ENCODE measurements at regions of chr1 and their contacts with region 1.

Region 1: GRCh38 chr1:189429610-189430009 is 1048.1 kb downstream of the BRINP3 start:
- DNase-seq: peak; percentile 53
- ATAC-seq: peak; percentile 76
- H3K4me3 ChIP-seq: no peak overlapping the region
- H3K27ac ChIP-seq: no peak overlapping the region
- H3K4me1 ChIP-seq: no peaks in the 10 kb centered on the region
- H3K27me3 ChIP-seq: no peaks in the 10 kb centered on the region
- CTCF ChIP-seq: peak; percentile 78
- EP300 ChIP-seq: no peak
- POLR2A ChIP-seq: no peak
- RAD21 ChIP-seq: no peak

Region 2: GRCh38 chr1:189313488-189313887 is 116.1 kb before region 1 on chr1:
- CTCF ChIA-PET with region 1: no interaction called
- POLR2A ChIA-PET with region 1: no interaction called
- in situ Hi-C with region 1: no loop called
- intact Hi-C with region 1: no loop called
- DNase-seq: no peak
- ATAC-seq: no peak
- H3K4me3 ChIP-seq: no peak overlapping the region
- H3K27ac ChIP-seq: no peak overlapping the region
- H3K4me1 ChIP-seq: no peaks in the 10 kb centered on the region
- H3K27me3 ChIP-seq: no peaks in the 10 kb centered on the region
- CTCF ChIP-seq: no peak
- EP300 ChIP-seq: no peak
- POLR2A ChIP-seq: no peak
- RAD21 ChIP-seq: no peak

Region 3: GRCh38 chr1:189369612-189370011 is 60.0 kb before region 1 on chr1:
- CTCF ChIA-PET with region 1: no interaction called
- POLR2A ChIA-PET with region 1: no interaction called
- in situ Hi-C with region 1: no loop called
- intact Hi-C with region 1: no loop called
- DNase-seq: no peak
- ATAC-seq: no peak
- H3K4me3 ChIP-seq: no peak overlapping the region
- H3K27ac ChIP-seq: no peak overlapping the region
- H3K4me1 ChIP-seq: no peaks in the 10 kb centered on the region
- H3K27me3 ChIP-seq: no peaks in the 10 kb centered on the region
- CTCF ChIP-seq: no peak
- EP300 ChIP-seq: no peak
- POLR2A ChIP-seq: no peak
- RAD21 ChIP-seq: no peak

Region 4: DNA sequence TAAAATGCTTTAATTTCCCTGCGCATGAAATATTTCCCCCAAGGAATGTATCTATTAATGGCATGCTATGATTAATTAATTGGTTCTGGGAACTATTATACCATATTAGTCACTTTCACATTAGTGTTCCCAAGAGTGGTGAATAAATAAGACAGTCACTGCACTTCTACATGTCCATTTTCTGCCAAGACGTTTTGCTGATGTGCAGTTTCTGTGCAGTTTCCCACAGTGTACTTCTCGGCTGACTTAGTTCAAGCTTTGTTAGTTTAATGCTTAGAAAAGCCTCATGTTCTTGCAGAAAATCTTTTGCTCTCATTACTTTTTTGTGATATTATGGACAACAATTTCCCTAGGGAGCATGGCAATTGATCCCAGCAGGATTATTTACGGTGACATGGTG is 33.6 kb after region 1 on chr1:
- CTCF ChIA-PET with region 1: no interaction called
- POLR2A ChIA-PET with region 1: no interaction called
- in situ Hi-C with region 1: no loop called
- intact Hi-C with region 1: no loop called
- DNase-seq: no peak
- ATAC-seq: no peak
- H3K4me3 ChIP-seq: no peak overlapping the region
- H3K27ac ChIP-seq: no peak overlapping the region
- H3K4me1 ChIP-seq: no peaks in the 10 kb centered on the region
- H3K27me3 ChIP-seq: no peaks in the 10 kb centered on the region
- CTCF ChIP-seq: no peak
- EP300 ChIP-seq: no peak
- POLR2A ChIP-seq: no peak
- RAD21 ChIP-seq: no peak

Region 5: GRCh38 chr1:189646066-189646465 is 216.5 kb after region 1 on chr1:
- CTCF ChIA-PET with region 1: no interaction called
- POLR2A ChIA-PET with region 1: no interaction called
- in situ Hi-C with region 1: no loop called
- intact Hi-C with region 1: no loop called
- DNase-seq: no peak
- ATAC-seq: no peak
- H3K4me3 ChIP-seq: no peak overlapping the region
- H3K27ac ChIP-seq: no peak overlapping the region
- H3K4me1 ChIP-seq: peaks cover 8% of the 10 kb centered on the region; the same call in 1 of the 2 replicates
- H3K27me3 ChIP-seq: no peaks in the 10 kb centered on the region
- CTCF ChIP-seq: no peak
- EP300 ChIP-seq: no peak
- POLR2A ChIP-seq: no peak
- RAD21 ChIP-seq: no peak

Region 6: GRCh38 chr1:189673218-189673617 is 243.6 kb after region 1 on chr1:
- CTCF ChIA-PET with region 1: no interaction called
- POLR2A ChIA-PET with region 1: no interaction called
- in situ Hi-C with region 1: no loop called
- intact Hi-C with region 1: loop called (anchors 2 kb)
- DNase-seq: no peak
- ATAC-seq: no peak
- H3K4me3 ChIP-seq: no peak overlapping the region
- H3K27ac ChIP-seq: no peak overlapping the region
- H3K4me1 ChIP-seq: no peaks in the 10 kb centered on the region
- H3K27me3 ChIP-seq: no peaks in the 10 kb centered on the region
- CTCF ChIP-seq: no peak
- EP300 ChIP-seq: no peak
- POLR2A ChIP-seq: no peak
- RAD21 ChIP-seq: no peak

Region 7: DNA sequence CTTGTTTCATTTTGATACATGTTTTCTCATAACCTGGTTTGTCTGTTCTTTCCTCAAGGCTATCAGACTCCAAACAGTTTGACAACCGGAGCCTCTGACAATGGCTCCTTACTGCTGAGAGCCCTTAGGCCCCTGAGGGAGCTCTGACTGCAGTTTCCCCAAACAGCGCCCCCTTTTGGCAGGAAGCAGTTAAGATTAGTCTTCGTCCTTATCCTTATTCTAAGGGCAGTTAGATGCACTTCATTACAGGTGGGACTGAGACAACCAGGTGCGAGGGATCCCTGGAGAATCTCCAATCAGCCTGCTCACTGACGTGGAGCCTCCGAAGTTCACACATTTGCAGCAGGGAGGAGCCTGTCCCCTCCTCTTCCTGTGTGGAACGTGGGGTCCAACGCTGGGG is 654.9 kb after region 1 on chr1:
- CTCF ChIA-PET with region 1: no interaction called
- POLR2A ChIA-PET with region 1: no interaction called
- in situ Hi-C with region 1: no loop called
- intact Hi-C with region 1: loop called (anchors 10 kb)
- DNase-seq: peak; percentile 28
- ATAC-seq: peak; percentile 97
- H3K4me3 ChIP-seq: no peak overlapping the region
- H3K27ac ChIP-seq: no peak overlapping the region
- H3K4me1 ChIP-seq: no peaks in the 10 kb centered on the region
- H3K27me3 ChIP-seq: no peaks in the 10 kb centered on the region
- CTCF ChIP-seq: peak; percentile 55
- EP300 ChIP-seq: no peak
- POLR2A ChIP-seq: no peak
- RAD21 ChIP-seq: no peak

Region 8: DNA sequence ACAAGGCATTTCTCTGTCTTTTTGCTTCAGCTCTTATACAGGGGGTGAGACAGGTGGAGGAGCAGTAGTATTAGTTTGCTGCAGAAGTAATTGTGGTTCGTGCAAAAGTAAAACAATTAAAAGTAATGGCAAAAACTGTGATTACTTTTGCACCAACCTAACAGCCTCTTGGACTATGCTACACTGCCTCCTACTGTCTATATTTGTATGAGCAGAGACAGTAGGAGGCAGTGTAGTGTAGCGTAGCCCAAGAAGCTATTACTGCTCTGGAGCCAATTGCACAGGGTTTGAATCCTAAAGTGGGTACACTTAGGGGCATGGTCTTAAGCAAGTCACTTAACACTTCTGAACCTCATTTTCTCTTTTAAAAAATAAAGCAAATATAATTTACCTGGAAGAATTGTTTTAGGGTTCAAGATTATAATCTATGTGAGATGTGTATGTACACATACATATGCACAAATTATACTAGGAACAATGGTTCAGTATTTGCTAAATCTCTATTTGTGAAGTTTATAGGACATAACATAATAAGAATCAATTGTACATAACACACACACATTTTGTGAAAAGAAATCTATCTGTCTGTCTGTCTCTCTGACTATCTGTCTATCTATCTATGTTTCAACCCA is 944.2 kb after region 1 on chr1:
- CTCF ChIA-PET with region 1: interaction called, 3 read pairs
- POLR2A ChIA-PET with region 1: no interaction called
- in situ Hi-C with region 1: no loop called
- intact Hi-C with region 1: loop called (anchors 1 kb)
- DNase-seq: peak; percentile 15
- ATAC-seq: peak; percentile 97
- H3K4me3 ChIP-seq: no peak overlapping the region
- H3K27ac ChIP-seq: no peak overlapping the region
- H3K4me1 ChIP-seq: no peaks in the 10 kb centered on the region
- H3K27me3 ChIP-seq: no peaks in the 10 kb centered on the region
- CTCF ChIP-seq: peak; percentile 69
- EP300 ChIP-seq: no peak
- POLR2A ChIP-seq: no peak
- RAD21 ChIP-seq: 0 out of 2 replicates have a peak, but pooled peaks have one; percentile 35

Region 9: DNA sequence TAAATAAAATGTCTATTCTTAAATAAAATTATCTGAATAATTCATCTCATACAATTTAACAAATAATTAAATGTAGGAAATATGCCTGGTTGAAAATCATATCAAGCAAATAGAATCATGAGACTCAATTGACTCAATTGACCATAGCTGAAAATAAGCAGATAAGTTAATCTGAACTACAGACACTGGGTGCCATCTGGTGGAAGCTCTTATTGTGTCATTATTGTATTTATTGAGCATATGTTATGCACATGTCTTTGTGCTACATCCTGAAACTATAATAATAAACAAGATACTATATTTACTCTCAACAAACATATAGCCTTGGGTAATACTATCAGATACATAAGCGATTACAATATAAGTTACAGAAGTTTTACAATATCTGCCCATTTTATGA is 1007.0 kb after region 1 on chr1:
- CTCF ChIA-PET with region 1: no interaction called
- POLR2A ChIA-PET with region 1: no interaction called
- in situ Hi-C with region 1: no loop called
- intact Hi-C with region 1: loop called (anchors 5 kb)
- DNase-seq: peak; percentile 15
- ATAC-seq: no peak
- H3K4me3 ChIP-seq: no peak overlapping the region
- H3K27ac ChIP-seq: no peak overlapping the region
- H3K4me1 ChIP-seq: no peaks in the 10 kb centered on the region
- H3K27me3 ChIP-seq: no peaks in the 10 kb centered on the region
- CTCF ChIP-seq: peak; percentile 36; the same call in 1 of the 2 replicates
- EP300 ChIP-seq: no peak
- POLR2A ChIP-seq: no peak
- RAD21 ChIP-seq: no peak

Measured in HepG2 (cell line).